Activated naive CD4-positive, alpha-beta T cell treated with anti-CD3 and anti-CD28 coated beads for 36 hours (primary cell): ENCODE measurements at regions of chr19 and their contacts with region 1.

Region 1: DNA sequence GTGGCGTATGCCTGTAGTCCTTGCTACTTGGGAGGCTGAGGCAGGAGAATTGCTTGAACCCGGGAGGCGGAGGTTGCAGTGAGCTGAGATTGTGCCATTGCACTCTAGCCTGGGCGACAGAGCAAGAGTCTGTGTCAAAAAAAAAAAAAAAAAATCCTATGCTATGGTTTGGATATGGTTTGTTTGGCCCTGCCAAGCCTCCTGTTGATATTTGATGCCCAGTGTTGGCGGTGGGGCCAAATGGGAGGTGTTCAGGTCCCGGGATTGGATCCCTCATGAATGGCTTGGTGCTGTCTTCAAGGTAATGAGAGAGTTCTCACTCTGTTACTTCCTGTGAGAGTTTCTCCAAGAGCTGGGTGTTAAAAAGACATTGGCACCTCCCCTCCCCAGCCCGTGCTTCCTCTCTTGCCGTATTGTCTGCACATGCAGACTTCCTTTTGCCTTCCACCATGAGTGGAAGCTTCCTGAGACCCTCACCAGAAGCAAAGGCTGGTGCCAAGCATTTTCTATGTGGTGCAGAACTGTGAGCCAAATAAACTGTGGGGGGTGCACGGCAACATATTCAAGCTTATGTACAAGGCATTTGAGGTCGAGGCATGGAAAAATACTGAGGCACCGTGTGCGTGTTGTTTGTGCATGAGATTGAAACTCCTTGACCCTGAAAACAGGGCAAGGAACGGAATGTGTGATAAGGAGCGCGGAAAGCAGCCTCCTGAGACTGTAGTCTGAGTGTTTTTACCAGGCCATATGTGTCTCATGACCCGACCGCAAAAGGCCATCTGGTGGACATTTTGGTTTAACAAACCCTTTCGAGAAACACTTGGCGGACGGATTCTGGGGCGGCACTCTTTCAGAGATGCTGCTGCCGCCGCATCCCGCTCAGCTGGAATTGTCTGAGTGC is 7.3 kb downstream of the SIGLEC9 start:
- DNase-seq: peak; percentile 70
- H3K4me3 Mint-ChIP-seq: peak overlapping the region; percentile 56
- H3K27ac Mint-ChIP-seq: peak overlapping the region; percentile 73
- H3K4me1 Mint-ChIP-seq: peaks cover 65% of the 10 kb centered on the region
- H3K27me3 Mint-ChIP-seq: no peaks in the 10 kb centered on the region

Region 2: DNA sequence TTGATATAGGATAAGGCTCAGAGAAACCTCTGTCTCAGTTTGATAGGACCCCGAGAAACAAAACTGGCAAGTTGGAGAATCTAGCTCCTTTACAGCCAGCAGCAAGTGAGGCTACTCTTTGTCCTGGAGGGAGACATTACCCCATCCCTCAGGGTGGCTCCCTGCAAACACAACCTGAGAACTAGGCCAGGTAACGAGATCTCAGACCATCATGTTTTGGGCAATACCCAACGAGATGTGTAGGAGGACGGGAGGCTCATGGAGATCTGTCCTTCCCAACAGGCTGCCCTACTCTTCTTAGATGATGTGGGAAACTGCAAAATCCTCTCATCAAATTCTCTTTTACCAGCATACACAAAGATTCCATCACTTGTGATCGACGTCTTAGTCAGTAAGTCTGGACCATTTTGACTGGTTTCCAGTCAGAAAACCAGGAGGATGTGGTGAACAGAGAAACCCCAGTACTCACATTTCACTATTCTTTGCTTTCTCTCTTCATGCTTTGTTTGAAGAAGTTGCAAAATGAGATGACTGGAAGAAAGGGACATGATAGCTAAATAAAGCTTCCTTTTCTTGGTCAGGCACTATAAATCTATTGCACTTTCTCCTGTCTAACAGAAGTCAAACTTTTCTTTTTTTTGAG is 17.8 kb before region 1 on chr19:
- CTCF ChIA-PET with region 1: interaction called, 3 read pairs
- intact Hi-C with region 1: loop called (anchors 1 kb)
- DNase-seq: peak; percentile 61
- H3K4me3 Mint-ChIP-seq: no peak overlapping the region
- H3K27ac Mint-ChIP-seq: no peak overlapping the region
- H3K4me1 Mint-ChIP-seq: peaks cover 27% of the 10 kb centered on the region
- H3K27me3 Mint-ChIP-seq: no peaks in the 10 kb centered on the region